BJ (cell line): ENCODE measurements at regions of chr6 and their contacts with region 1.

Region 1: DNA sequence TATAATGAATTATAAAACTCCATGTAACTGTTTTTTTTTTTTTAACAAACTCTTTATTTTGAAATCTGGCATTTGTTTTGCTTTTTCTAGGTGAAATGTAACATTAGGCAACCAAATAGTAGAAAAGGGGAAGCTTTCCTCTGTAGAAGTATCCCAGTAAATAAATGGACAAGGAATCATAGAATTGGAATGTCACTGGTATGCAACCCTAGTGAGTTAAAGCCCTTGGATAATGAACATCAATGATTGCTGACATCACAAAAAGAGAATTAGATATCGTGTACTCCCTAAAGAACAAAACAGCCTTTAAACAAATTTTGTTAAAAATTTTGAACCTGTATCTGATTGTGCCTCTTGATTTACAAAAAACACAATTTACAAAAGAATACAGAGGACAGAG is 93.9 kb upstream of the OGFRL1 start:
- DNase-seq: peak; percentile 61
- H3K4me3 ChIP-seq: no peak overlapping the region
- H3K27me3 ChIP-seq: no peaks in the 10 kb centered on the region
- CTCF ChIP-seq: no peak

Region 2: DNA sequence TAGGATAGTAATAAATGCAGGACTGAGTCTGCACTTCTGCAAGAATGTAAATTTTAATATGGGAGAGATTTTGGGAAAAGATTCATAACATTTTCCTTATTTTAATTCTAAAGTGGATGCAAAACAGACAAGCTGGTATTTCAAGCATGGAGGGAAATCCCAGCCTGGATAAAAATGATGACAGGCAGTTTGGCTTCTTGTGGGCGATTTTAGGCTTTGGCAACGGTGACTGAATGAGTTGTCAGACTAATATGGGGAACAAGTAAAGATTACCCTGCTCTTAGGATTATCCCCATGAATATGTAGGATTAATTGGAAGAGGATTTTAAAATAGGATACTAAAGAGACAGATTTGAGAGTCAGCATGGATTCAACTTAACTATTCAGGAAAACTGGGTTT is 114.9 kb after region 1 on chr6:
- CTCF ChIA-PET with region 1: interaction called, 3 read pairs
- POLR2A ChIA-PET with region 1: interaction called, 10 read pairs
- DNase-seq: no peak
- H3K4me3 ChIP-seq: no peak overlapping the region
- H3K27me3 ChIP-seq: no peaks in the 10 kb centered on the region
- CTCF ChIP-seq: no peak